Naive thymus-derived CD8-positive, alpha-beta T cell (primary cell): ENCODE measurements at regions of chr21 and their contacts with region 1.

Region 1: DNA sequence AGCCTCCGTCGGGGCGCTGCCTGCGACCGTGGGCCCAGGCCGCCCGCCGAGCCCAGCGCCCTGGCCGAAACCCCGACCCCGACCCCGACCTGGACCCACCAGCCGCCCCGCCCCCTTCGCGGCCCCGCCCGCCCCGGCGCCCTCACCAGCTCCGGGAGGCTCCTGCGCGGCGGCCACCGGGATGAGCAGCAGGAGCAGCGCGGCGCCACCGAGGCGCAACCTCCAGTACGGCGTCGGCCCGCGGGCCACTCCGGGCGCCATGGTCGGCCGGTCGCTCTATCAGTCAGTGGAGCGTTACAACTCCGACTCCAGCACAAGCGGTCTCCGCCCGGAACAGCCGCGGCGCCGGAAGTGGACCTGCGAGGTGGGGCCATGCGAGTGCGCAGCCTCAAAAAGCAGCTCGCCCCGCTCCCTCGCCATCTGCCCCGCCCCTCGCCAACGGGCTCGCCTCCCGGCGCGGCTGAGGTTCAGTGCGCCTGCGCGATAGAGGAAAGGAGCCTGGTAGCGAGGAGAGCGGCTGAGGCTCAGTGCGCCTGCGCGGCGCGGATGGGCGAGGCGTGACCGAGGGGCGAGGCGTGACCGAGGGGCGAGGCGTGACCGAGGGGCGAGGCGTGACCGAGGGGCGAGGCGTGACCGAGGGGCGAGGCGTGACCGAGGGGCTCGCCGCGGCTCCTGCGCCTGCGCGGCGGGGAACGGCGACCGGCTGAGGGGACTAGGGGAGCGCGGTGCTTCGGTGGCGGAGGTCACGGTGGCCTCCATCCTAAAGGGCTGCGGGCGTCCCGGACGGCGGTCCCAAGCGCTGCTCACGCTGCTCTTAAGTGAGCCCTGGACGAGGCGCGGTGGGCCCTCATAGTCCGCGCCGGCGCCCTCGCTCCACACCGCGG is at the start of gene PTTG1IP:
- DNase-seq: peak; percentile 95 to 100 (median 100)
- ATAC-seq: peak; percentile 75 to 78
- H3K4me3 Mint-ChIP-seq: peak within 1 kb of the TSS; percentile 93 to 98 (median 94)
- H3K27ac Mint-ChIP-seq: peak within 1 kb of the TSS; percentile 88 to 96 (median 94)
- H3K4me1 Mint-ChIP-seq: peaks cover 22 to 69% (median 51%) of the 10 kb centered on the region in 4 donors
- H3K27me3 Mint-ChIP-seq: no peaks in the 10 kb centered on the region
- polyA plus RNA-seq, gene PTTG1IP: 42.4 to 54.1 (median 44.3) TPM

Region 2: DNA sequence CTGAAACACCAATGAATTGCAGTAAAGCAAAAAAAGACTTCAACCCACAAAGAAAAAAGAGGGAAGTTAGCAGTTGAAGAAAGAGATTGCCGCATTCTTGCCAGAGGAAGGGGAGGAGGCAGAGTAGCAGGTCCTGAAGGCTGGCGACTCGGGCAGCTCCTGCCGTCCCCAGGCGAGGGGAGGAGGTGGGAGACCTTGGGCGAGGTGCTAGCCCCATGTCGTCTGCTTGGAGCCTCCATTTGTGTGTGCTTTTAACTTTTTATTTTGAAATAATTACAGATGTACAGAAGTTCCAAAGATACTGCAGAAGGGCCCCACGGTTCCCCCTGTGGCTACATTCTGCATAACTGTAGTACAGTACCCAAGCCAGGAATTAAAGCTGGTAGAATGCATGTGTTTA is 513.4 kb before region 1 on chr21:
- POLR2A ChIA-PET with region 1: no interaction called
- DNase-seq: peak in 1 of 10 donors; percentile 4
- ATAC-seq: peak; percentile 49 to 65
- H3K4me3 Mint-ChIP-seq: peak overlapping the region in 2 of 10 donors; percentile 42 to 49
- H3K27ac Mint-ChIP-seq: peak overlapping the region in 2 of 10 donors; percentile 27 to 41
- H3K4me1 Mint-ChIP-seq: peaks cover 10 to 28% (median 26%) of the 10 kb centered on the region in 4 donors
- H3K27me3 Mint-ChIP-seq: peaks cover 0 to 8% (median 0%) of the 10 kb centered on the region in 5 donors

Region 3: GRCh38 chr21:44817506-44817880 is 56.1 kb before region 1 on chr21:
- POLR2A ChIA-PET with region 1: interaction called, 23 read pairs
- DNase-seq: peak; percentile 87 to 97 (median 92)
- ATAC-seq: peak; percentile 81 to 84
- H3K4me3 Mint-ChIP-seq: peak overlapping the region; percentile 33 to 80 (median 68)
- H3K27ac Mint-ChIP-seq: peak overlapping the region in 3 of 10 donors; percentile 29 to 65 (median 29)
- H3K4me1 Mint-ChIP-seq: peaks cover 10 to 28% (median 13%) of the 10 kb centered on the region in 4 donors
- H3K27me3 Mint-ChIP-seq: no peaks in the 10 kb centered on the region

Region 4: GRCh38 chr21:44892536-44893277 is 19.1 kb after region 1 on chr21:
- POLR2A ChIA-PET with region 1: interaction called, 19 read pairs
- DNase-seq: peak; percentile 61 to 81 (median 72)
- ATAC-seq: peak; percentile 87 to 90
- H3K4me3 Mint-ChIP-seq: peak overlapping the region in 1 of 10 donors; percentile 18
- H3K27ac Mint-ChIP-seq: peak overlapping the region; percentile 44 to 91 (median 79)
- H3K4me1 Mint-ChIP-seq: peaks cover 8 to 32% (median 22%) of the 10 kb centered on the region in 4 donors
- H3K27me3 Mint-ChIP-seq: no peaks in the 10 kb centered on the region

Region 5: DNA sequence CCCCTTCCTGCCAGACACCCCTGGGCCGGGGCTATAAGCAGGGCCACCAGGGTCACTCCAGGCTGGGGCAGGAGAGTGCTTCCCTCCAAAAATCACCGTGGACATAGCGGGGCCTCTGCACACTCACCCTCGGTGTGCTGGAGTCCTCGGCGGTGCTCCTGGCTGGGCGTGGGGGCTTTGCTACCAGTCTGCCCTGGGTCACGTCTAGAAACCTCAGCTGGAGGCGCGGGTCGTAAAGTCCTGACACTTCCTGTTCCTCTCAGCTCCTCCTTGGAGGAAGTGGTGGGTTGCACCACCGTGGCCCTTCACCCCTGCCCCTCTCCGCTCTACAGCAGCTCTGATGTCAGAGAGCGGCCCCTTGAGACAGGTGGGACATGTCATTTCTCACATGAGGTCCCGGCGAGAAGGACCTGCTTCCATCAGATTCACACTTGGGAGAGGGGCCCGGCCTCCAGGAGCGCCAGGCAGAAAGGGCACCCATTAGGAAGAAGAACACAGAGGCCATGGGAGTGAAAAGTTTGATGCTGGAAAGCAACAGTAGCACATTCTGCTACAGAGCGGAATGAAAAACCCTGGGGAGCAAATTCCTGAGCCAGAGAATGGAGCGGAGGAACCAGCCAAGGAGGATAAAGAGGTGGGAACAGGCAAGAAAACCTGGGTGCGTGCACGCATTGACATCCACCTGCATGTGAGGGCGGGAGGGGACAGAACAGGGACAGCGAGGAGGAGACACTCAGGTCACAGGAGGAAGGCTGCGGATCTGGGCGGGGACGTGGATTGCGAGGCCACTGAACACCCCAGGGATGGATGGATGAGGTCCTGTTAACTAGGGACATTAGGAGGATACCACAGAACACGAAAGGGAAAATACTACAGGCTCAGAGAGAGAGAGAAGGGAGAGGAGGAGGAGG is 47.4 kb after region 1 on chr21 and contains the start of gene ITGB2:
- POLR2A ChIA-PET with region 1: interaction called, 91 read pairs
- DNase-seq: peak in 8 of 10 donors; percentile 38 to 80 (median 58)
- ATAC-seq: peak; percentile 63 to 73
- H3K4me3 Mint-ChIP-seq: peak within 1 kb of the TSS; percentile 93 to 100 (median 98)
- H3K27ac Mint-ChIP-seq: peak within 1 kb of the TSS; percentile 92 to 99 (median 96)
- H3K4me1 Mint-ChIP-seq: peaks cover 42 to 88% (median 81%) of the 10 kb centered on the region in 4 donors
- H3K27me3 Mint-ChIP-seq: no peaks in the 10 kb centered on the region
- polyA plus RNA-seq, gene ITGB2: 423 to 549 (median 524) TPM

Region 6: GRCh38 chr21:45091550-45092322 is 218.1 kb after region 1 on chr21:
- POLR2A ChIA-PET with region 1: no interaction called
- DNase-seq: no peak
- ATAC-seq: no peak
- H3K4me3 Mint-ChIP-seq: no peak overlapping the region
- H3K27ac Mint-ChIP-seq: peak overlapping the region in 4 of 10 donors; percentile 31 to 57 (median 44)
- H3K4me1 Mint-ChIP-seq: peaks cover 36 to 90% (median 74%) of the 10 kb centered on the region in 4 donors
- H3K27me3 Mint-ChIP-seq: no peaks in the 10 kb centered on the region